Ascending aorta (tissue), 2 donors: ENCODE measurements at regions of chr1 and their contacts with region 1.

Region 1: GRCh38 chr1:178310685-178311105 is 186.1 kb downstream of the CLEC20A start:
- DNase-seq: no peak
- H3K4me3 ChIP-seq: no peak overlapping the region
- H3K27ac ChIP-seq: no peak overlapping the region
- H3K4me1 ChIP-seq: peaks cover 0 to 6% of the 10 kb centered on the region in 2 donors
- H3K27me3 ChIP-seq: no peaks in the 10 kb centered on the region
- CTCF ChIP-seq: peak; percentile 62 to 72 (median 67)

Region 2: DNA sequence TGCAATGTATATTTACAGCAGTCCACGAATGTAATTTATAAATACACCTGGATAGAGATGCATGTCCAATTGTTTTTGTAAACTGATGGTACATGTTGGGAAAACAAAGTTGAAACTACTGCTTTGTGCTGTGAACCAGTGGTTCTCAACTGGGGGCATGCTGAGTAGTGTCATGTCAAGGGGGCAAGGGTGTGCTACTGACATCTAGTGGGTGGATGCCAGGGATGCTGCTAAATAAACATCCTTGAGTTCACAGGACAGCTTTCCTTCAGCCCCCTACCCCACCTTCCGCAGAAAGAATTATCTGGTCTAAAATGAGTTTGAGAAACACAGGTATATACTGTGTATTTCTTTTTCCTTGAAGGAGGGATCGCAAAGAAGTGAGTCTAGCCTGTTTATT is 120.9 kb before region 1 on chr1:
- intact Hi-C with region 1: no loop called
- DNase-seq: no peak
- H3K4me3 ChIP-seq: no peak overlapping the region
- H3K27ac ChIP-seq: no peak overlapping the region
- H3K4me1 ChIP-seq: no peaks in the 10 kb centered on the region
- H3K27me3 ChIP-seq: no peaks in the 10 kb centered on the region
- CTCF ChIP-seq: peak in 1 of 3 experiments; percentile 20

Region 3: DNA sequence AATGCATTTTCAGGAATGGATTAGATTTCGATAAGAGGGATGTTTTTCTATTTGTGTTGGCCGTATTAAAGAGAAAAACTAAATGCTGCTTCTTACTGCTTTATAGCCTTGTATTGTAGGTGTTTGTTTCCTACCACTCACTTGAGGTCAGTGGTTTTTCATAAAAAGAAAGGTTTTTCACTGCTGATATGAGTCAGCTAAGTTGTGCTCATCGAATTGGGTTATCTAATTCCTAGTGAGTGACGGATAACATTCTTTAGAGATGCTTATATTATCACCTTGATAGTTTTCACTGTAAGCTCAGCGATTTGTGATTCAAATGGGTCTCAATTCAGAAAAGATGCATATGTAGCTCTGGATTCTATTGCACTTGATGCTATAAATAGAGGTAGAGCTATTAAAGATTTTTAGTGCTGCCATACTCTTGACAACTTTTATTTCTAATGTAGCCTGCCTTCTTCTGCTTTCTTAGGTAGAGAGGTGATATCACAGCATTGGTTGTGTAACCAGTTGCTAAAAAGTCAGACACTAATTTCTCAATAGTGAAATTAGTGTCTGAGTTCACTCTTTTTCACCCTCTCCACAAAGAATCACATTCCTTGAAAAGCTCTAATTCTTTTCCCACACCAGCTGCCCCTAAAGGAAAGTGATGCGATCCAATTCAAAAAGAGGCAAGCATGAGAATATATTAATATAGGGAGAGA is 36.8 kb before region 1 on chr1:
- intact Hi-C with region 1: no loop called
- DNase-seq: no peak
- H3K4me3 ChIP-seq: no peak overlapping the region
- H3K27ac ChIP-seq: no peak overlapping the region
- H3K4me1 ChIP-seq: no peaks in the 10 kb centered on the region
- H3K27me3 ChIP-seq: no peaks in the 10 kb centered on the region
- CTCF ChIP-seq: no peak

Region 4: DNA sequence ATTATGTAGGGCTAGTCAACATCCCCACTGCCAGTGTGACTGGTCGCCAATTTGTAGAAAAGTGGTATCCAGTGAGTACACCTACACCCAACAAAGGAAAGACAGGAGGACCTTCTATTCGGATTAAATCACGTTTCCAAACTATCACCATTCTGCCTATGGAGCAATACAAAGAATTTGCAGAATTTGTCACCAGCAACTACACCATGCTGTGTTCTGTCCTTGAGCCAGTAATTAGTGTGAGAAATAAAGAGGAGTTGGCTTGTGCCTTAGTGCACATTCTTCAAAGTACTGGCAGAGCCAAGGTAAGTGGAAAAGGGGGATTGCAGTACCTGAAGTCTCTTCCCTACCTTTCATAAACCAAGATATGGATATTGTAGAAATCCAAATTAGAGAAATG is 132.2 kb after region 1 on chr1:
- intact Hi-C with region 1: loop called (anchors 10 kb)
- DNase-seq: no peak
- H3K4me3 ChIP-seq: no peak overlapping the region
- H3K27ac ChIP-seq: no peak overlapping the region
- H3K4me1 ChIP-seq: no peaks in the 10 kb centered on the region
- H3K27me3 ChIP-seq: no peaks in the 10 kb centered on the region
- CTCF ChIP-seq: no peak

Region 5: DNA sequence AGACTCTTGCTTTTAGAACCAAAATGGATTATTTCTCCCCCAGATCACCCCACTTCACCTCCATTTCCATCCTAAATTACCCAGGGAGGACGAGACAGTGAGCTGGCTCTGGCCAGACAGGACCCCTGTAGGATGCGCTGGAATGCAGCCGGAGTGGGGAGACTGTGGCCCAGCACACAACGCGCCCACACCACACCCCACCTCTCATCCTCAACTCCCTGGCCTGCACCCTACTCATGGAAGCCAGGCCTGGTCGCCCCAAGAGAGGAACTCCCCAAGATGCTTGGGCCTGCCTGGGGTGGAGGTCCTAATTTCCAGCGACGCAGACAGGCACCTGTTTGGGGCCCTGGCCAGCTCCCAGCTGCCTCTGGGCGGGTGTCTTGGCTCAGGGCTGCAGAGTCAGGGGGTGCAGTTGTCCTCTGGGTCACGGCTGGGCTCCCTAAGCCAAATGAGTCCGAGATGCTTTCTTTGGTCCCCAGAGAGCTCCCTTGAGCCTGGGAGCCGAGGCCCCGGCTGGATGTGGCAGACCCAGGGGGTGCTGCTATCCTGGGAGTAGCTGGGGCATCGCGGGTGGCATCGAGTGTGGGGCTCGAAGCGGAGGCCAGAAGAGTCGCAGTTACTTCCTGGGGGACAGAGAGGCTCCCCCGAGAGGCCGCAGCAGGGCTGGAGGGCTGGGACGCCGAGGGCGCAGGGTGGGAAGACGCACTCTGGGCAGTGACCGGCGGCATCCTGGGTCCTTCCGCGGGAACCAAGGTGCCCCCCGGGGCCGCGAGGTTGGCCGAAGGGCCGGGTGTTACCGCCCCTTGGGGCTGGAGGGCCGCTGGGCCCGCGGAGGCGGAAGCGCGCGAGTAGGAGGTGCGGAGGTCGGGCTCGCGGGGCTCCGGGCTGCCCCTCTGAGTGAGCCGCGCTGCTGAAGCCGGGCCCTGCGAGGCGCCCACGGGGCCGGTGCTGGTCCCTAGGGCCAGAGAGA is 175.7 kb after region 1 on chr1:
- intact Hi-C with region 1: loop called (anchors 10 kb)
- DNase-seq: no peak
- H3K4me3 ChIP-seq: peak overlapping the region; percentile 39 to 63
- H3K27ac ChIP-seq: no peak overlapping the region
- H3K4me1 ChIP-seq: peaks cover 0 to 4% of the 10 kb centered on the region in 2 donors
- H3K27me3 ChIP-seq: no peaks in the 10 kb centered on the region
- CTCF ChIP-seq: no peak

Region 6: DNA sequence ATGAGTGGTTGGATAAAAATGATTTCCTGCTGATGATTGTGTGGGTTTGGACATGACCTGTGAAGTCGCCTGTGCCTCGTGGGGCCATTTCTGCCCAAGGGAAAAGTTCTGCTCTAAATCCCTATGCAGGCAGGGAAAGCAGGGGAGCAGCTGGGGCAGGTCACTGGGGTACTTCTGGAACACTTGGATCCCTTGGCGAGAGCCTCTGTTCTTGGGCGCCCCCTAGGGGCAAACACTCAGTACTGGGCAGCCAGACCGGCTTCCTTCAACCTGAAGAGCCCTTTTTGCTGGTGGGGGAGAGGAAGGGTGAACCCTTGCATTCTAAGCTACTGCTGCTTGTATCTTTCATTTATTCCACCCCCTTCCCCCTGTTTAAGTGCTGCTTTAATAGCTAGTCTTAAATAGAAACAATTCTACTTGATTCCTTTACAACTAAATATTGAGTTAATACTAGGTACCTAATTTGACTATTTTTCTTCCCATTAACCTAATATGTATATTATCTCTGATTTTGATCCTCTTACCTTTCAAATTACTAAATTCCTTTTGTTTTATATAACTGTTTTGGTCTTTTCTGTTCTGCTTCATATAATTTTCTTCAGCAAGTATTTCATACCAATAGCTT is 191.1 kb after region 1 on chr1:
- intact Hi-C with region 1: loop called (anchors 5 kb)
- DNase-seq: peak in 1 of 2 donors; percentile 75
- H3K4me3 ChIP-seq: no peak overlapping the region
- H3K27ac ChIP-seq: no peak overlapping the region
- H3K4me1 ChIP-seq: no peaks in the 10 kb centered on the region
- H3K27me3 ChIP-seq: no peaks in the 10 kb centered on the region
- CTCF ChIP-seq: peak; percentile 45 to 71 (median 65)

Region 7: GRCh38 chr1:178532392-178532791 is 221.7 kb after region 1 on chr1:
- intact Hi-C with region 1: loop called (anchors 2 kb)
- DNase-seq: peak in 1 of 2 donors; percentile 85
- H3K4me3 ChIP-seq: no peak overlapping the region
- H3K27ac ChIP-seq: no peak overlapping the region
- H3K4me1 ChIP-seq: no peaks in the 10 kb centered on the region
- H3K27me3 ChIP-seq: no peaks in the 10 kb centered on the region
- CTCF ChIP-seq: peak; percentile 75 to 88 (median 87)

Region 8: DNA sequence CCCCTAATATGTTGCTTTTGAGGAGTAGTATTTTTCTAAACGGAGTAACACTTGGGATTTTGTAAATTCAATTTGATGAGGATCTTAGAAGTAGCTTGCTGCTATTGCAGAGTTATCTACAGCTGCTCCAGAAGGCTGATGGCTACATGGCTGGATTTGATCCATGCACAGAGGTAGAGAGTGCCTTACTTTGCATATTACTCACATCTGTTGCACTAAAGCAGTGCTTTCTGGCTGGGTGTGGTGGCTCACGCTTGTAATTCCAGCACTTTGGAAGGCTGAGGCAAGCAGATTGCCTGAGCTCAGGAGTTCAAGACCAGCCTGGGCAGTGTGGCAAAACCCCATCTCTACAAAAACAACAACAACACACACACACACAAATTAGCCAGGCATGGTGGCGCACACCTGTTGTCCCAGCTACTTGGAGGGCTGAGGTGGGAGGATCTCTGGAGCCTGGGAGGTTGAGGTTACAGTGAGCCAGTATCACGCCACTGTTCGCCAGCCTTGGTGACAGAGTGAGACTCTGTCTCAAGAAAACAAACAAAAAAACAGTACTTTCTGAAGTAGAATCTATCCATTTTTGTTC is 439.0 kb after region 1 on chr1:
- intact Hi-C with region 1: loop called (anchors 10 kb)
- DNase-seq: no peak
- H3K4me3 ChIP-seq: no peak overlapping the region
- H3K27ac ChIP-seq: no peak overlapping the region
- H3K4me1 ChIP-seq: no peaks in the 10 kb centered on the region
- H3K27me3 ChIP-seq: no peaks in the 10 kb centered on the region
- CTCF ChIP-seq: no peak